Activated CD4-positive, alpha-beta memory T cell treated with anti-CD3 and anti-CD28 coated beads, Interleukin-2, amount 10 ng/mL, durations not matched to agents 7 days and 5 days (primary cell): ENCODE measurements at regions of chr14 and their contacts with region 1.

Region 1: DNA sequence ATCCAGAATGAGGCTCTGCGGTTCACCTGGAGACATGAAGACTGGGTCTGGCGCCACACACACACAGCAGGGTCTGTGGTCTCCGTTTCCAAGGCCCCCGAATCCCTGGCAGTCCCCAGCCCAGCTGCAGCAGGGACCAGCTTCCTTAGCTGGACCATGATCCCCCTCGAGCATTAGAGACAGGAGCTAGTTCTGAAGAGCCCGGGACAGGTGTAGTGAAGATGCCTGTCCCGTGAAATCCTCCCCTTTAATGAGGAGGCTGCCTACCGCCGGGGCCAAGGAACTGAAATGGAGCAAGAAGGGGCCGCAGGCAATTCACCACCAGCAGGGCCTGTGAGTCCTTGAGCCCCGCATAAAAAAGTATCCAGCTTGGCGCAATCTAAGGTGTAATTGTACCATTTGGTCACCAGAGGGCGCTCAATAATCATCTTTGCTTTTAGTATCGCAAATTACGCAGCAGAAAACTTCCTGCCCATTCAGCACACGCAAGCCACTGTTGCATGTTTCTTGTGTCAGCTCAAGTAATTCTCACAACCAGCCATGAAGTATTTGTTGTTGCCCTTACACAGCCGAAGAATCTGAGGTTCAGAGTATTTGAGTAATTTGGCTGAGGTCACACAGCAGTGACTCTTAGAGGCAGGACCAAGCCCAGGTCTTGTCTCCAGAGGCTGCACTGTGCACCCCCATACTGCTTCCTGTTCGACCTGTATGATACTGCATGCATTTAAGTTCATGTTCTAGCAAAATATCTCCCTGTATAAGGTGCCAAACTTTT is 54.3 kb upstream of the PPP2R5C start:
- DNase-seq: peak; percentile 68
- H3K4me3 Mint-ChIP-seq: no peak overlapping the region
- H3K27ac Mint-ChIP-seq: peak overlapping the region; percentile 73
- H3K4me1 Mint-ChIP-seq: peaks cover 45% of the 10 kb centered on the region
- H3K27me3 Mint-ChIP-seq: peaks cover 15% of the 10 kb centered on the region

Region 2: DNA sequence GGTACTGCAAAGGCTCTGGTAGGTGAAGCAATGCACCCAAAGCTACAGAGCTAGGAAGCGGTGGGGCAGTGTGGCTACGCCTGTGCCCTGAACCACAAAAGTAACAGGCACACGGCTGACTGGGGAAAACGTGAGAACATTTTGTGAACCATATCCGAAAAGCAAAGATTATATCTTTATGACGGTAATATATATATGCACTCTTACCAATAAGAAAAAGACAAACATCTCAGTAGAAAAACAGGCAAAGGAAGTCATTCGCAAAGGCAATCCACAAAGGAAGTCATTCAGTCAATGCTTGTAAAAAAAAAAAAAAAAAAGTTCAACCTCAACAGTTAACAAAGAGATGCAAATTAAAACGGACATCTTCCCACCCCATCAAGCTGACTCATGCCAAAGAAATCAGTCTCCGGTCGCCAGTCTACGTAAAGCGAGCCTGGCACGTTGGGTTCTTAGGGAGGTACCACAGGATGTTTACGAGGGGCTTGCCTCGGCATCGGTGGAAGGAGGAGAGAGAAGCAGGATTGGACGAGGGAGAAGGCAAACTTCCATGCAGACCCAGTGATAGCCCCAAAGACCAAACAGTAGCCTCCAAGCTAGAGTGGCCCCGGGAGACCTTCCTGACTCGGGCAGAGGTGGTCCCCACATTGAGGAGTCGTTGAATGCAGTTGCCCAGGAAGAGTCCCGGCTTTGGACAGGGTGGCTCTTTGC is 14.9 kb after region 1 on chr14:
- CTCF ChIA-PET with region 1: interaction called, 39 read pairs
- POLR2A ChIA-PET with region 1: interaction called, 59 read pairs
- DNase-seq: peak; percentile 89
- H3K4me3 Mint-ChIP-seq: peak overlapping the region; percentile 74
- H3K27ac Mint-ChIP-seq: peak overlapping the region; percentile 100
- H3K4me1 Mint-ChIP-seq: peaks cover 44% of the 10 kb centered on the region
- H3K27me3 Mint-ChIP-seq: no peaks in the 10 kb centered on the region

Region 3: DNA sequence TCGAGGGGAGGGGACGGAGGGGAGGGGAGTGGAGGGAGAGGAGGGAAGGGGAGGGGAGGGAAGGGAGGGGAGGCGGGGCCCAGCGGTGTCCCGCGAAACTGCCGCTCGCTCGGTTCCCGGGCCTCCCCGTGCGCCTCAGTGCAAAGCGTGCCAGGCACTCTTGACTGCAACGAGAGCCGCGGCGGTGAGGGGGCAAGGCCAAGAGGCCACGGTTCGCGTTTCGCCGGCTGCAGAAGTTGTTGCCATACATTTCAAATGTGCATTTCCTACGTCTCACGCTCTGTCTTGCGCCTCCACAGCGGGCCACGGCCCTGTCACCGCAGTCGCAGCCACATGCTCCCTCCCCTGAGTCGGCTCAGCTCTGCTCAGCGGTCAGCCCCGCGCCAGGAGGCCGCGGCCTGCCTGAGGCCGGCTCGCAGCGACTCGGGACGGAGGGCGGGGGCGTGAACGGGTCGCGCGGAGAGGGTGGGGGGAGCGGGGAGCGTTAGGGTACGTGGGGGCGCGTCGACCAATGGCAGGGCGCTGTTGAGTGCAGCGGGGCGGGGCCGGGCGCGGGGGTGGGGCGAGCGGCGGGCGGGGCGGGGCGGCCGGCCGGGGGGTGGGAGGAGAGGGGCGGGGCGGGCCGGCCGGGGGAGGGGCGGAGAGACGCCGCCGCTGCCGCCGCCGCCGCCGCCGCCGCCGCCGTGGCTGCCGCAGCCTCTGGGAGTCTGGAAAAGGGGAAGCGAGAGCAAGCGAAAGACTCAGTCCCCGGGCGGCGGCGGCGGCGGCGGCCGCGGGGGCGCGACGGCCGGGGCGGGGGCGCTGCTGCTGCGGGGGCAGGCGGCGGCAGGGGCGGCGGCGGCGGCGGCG is 54.0 kb after region 1 on chr14 and contains the start of gene PPP2R5C:
- CTCF ChIA-PET with region 1: interaction called, 26 read pairs
- POLR2A ChIA-PET with region 1: interaction called, 21 read pairs
- DNase-seq: peak; percentile 88
- H3K4me3 Mint-ChIP-seq: peak within 1 kb of the TSS; percentile 83
- H3K27ac Mint-ChIP-seq: peak within 1 kb of the TSS; percentile 73
- H3K4me1 Mint-ChIP-seq: peaks cover 39% of the 10 kb centered on the region
- H3K27me3 Mint-ChIP-seq: peaks cover 12% of the 10 kb centered on the region
- total RNA-seq, gene PPP2R5C: 338 to 348 TPM

Region 4: GRCh38 chr14:101843665-101844064 is 136.4 kb after region 1 on chr14:
- CTCF ChIA-PET with region 1: interaction called, 26 read pairs
- POLR2A ChIA-PET with region 1: interaction called, 5 read pairs
- DNase-seq: peak; percentile 70
- H3K4me3 Mint-ChIP-seq: no peak overlapping the region
- H3K27ac Mint-ChIP-seq: peak overlapping the region; percentile 37
- H3K4me1 Mint-ChIP-seq: peaks cover 88% of the 10 kb centered on the region
- H3K27me3 Mint-ChIP-seq: no peaks in the 10 kb centered on the region

Region 5: GRCh38 chr14:101964297-101965144 is 257.3 kb after region 1 on chr14 and contains the start of gene DYNC1H1:
- CTCF ChIA-PET with region 1: interaction called, 16 read pairs
- POLR2A ChIA-PET with region 1: interaction called, 6 read pairs
- DNase-seq: peak; percentile 92
- H3K4me3 Mint-ChIP-seq: peak within 1 kb of the TSS; percentile 92
- H3K27ac Mint-ChIP-seq: peak within 1 kb of the TSS; percentile 89
- H3K4me1 Mint-ChIP-seq: peaks cover 43% of the 10 kb centered on the region
- H3K27me3 Mint-ChIP-seq: peaks cover 4% of the 10 kb centered on the region
- total RNA-seq, gene DYNC1H1: 223 to 241 TPM